Activated naive CD4-positive, alpha-beta T cell treated with anti-CD3 and anti-CD28 coated beads for 36 hours (primary cell): ENCODE measurements at regions of chr12 and their contacts with region 1.

Region 1: DNA sequence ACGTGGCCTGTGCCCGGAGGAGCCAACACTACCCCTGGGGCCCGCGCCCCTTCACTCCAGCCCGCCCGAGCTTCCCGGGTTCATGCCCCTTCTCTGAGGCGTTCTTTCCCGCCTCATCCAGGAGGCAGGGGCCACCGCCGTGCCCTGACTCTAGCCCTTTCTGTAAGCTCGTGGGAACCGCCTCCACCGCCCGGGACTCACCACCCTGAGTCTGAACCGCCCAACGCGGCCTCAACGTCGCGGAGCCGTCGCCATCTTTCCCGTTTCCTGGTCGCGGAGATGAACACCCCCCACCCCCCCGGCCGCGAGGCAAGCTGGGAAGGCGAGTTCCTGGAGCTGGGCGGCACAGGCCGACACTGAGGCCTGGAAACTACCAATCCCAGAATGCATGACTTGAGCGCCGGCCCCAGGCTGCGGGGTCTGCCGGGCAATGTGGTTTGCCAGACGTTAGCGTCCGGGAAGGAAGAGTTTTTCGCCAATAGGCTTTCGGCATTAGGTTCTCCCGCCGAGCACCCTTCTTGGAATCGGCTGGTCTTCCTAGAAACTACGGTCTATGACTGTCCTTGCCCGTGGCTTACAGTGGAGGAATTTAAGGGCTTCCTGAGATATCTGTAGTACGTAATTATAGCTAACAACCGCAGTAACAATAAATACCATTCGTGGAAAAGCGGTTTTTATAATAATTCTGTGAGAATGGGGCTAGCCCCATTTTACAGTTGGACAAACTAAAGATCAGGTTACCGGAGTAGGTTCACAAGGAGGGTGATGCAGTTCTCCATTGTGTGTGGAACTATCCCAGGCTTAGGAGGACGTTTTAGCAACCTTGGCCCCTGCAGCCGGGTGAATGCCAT is at the start of gene DDX23:
- DNase-seq: peak; percentile 97
- H3K4me3 Mint-ChIP-seq: peak within 1 kb of the TSS; percentile 94
- H3K27ac Mint-ChIP-seq: peak within 1 kb of the TSS; percentile 98
- H3K4me1 Mint-ChIP-seq: peaks cover 28% of the 10 kb centered on the region
- H3K27me3 Mint-ChIP-seq: no peaks in the 10 kb centered on the region
- total RNA-seq, gene DDX23: 115 to 125 TPM

Region 2: DNA sequence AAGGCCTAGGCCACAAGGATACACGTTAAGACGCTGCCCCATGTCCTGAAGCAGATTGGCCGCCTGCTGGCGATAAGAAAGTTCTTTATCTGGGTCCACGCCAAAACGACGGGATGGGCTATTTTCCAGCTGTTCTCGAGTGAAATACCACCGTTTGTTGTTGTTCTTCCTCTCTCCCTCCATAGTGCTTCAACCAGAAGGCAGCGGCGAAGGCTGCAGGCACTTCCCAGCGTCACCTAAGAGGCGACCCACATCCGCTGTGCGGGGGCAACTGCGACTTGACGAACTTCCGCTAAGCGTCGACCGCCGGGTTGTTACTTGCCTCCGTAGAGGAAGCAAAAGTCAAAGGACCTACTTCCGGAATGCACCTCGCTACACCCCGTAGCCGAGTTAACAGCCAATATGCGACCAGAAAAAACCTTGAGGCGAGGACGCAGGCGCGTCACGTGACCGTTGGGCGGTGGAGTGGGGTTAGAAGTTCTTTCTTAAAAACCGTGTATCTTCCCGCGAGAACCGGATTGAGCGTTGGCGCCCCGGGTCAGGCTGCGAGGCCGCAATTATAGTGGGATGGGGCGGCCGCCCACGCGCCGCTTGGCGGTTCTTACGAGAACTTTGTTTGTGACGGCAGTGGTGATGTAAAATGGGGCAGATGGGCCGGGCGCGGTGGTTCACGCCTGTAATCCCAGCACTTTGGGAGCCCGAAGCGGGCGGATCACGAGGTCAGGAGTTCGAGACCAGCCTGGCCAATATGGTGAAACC is 135.4 kb before region 1 on chr12 and contains the start of gene CCNT1:
- CTCF ChIA-PET with region 1: no interaction called
- intact Hi-C with region 1: loop called (anchors 1 kb)
- DNase-seq: peak; percentile 100
- H3K4me3 Mint-ChIP-seq: peak within 1 kb of the TSS; percentile 90
- H3K27ac Mint-ChIP-seq: peak within 1 kb of the TSS; percentile 99
- H3K4me1 Mint-ChIP-seq: peaks cover 39% of the 10 kb centered on the region
- H3K27me3 Mint-ChIP-seq: no peaks in the 10 kb centered on the region
- total RNA-seq, gene CCNT1: 73.8 to 77.0 TPM

Region 3: GRCh38 chr12:48865434-48866290 is 13.6 kb after region 1 on chr12 and contains the start of gene RND1:
- CTCF ChIA-PET with region 1: interaction called, 86 read pairs
- intact Hi-C with region 1: loop called (anchors 1 kb)
- DNase-seq: peak; percentile 93
- H3K4me3 Mint-ChIP-seq: peak within 1 kb of the TSS; percentile 87
- H3K27ac Mint-ChIP-seq: peak within 1 kb of the TSS; percentile 62
- H3K4me1 Mint-ChIP-seq: peaks cover 22% of the 10 kb centered on the region
- H3K27me3 Mint-ChIP-seq: peaks cover 22% of the 10 kb centered on the region
- total RNA-seq, gene RND1: 6.8 to 7.4 TPM

Region 4: GRCh38 chr12:48924617-48925303 is 72.7 kb after region 1 on chr12:
- CTCF ChIA-PET with region 1: interaction called, 14 read pairs
- intact Hi-C with region 1: loop called (anchors 1 kb)
- DNase-seq: peak; percentile 81
- H3K4me3 Mint-ChIP-seq: peak overlapping the region; percentile 91
- H3K27ac Mint-ChIP-seq: peak overlapping the region; percentile 96
- H3K4me1 Mint-ChIP-seq: peaks cover 49% of the 10 kb centered on the region
- H3K27me3 Mint-ChIP-seq: no peaks in the 10 kb centered on the region

Region 5: DNA sequence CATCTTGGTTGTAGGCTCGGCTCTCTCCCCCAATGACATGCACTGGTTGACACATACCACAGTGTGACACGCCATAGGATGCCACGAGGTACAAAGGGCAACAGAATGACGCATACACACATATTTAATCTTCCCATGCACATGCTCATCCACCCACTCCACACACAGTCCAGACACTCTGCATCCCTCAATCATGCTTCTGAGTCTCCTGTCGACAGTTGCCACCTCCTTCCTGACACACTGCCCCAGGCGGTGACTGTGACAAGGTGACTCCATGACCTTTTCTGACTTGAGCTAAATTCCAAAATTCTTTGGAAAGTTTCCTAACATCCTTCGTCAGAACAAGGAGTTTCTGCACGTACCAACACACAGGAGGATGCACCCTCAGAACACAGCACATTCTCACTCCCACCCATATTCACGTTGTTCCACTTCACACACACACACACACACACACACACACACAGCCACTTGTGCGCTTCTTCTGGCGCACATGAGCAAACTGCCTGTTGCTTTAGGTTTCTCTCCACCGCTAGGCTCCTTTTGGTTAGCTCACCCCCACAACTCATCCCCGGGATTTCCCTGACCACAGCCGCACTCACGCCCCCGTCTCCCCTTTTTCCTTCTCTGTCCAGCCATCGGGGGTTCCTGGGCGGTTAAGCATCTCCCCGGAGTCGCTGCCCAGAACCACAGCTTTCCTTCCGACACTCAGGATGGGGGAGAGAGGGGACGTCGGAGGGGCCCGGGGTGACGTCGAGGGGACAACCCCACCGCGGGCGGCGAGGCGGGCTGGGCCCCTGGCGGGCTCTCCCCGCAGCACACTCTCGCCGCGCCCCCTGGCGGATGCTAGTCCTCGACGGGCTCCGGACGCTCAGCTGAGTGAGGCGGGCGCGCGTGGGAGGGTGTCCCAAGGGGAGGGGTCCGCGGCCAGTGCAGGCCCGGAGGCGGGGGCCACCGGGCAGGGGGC is 125.5 kb after region 1 on chr12:
- CTCF ChIA-PET with region 1: interaction called, 16 read pairs
- intact Hi-C with region 1: loop called (anchors 1 kb)
- DNase-seq: peak; percentile 83
- H3K4me3 Mint-ChIP-seq: peak overlapping the region; percentile 19
- H3K27ac Mint-ChIP-seq: no peak overlapping the region
- H3K4me1 Mint-ChIP-seq: peaks cover 44% of the 10 kb centered on the region
- H3K27me3 Mint-ChIP-seq: peaks cover 67% of the 10 kb centered on the region

Region 6: DNA sequence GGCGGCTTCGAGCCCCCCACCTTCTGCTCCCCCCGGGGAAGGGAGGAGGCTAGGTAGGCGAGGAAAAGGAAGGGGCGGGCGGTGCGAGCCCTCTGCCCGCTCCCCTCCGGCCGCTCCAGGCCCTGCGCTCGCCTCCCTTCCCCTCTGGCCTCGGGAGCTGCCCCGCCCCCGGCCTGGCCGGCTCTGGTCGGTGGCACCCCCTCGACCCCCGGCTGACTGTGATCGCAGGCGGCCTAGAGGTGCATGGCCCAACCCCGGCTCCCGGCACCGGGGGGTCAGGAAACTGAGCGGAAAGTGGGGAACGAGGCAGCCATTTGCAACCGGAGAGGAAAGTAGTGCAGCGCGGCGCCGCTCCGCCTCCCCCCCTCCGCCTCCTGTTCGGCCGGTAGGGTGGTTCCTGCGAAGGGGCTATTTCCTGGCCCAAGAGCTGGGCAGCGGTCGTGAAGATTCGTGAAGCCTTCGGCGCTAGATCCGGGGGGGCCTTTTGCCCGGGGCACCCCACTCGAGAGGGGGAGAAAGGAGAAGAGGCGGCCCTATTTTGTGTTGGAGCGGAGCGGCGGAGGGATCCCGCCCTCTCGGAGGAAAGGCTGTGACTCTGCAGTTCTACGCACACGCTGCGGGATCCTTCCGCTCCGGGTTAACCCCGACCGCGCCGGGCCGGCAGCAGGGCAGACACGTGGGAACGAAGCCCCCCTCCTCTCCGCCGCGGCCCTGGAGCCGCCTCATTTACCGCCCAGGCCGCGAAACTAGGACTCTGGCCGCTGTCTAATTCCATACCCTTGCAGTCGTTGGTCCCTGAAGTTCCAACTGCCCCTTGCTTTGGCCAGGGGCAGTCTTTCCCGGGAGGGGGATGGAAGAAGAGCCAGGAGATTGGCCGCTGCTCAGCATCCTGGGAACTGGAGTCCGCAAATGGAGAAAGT is 208.4 kb after region 1 on chr12 and contains the start of gene KMT2D:
- CTCF ChIA-PET with region 1: interaction called, 3 read pairs
- intact Hi-C with region 1: loop called (anchors 5 kb)
- DNase-seq: peak; percentile 91
- H3K4me3 Mint-ChIP-seq: peak within 1 kb of the TSS; percentile 93
- H3K27ac Mint-ChIP-seq: peak within 1 kb of the TSS; percentile 96
- H3K4me1 Mint-ChIP-seq: peaks cover 51% of the 10 kb centered on the region
- H3K27me3 Mint-ChIP-seq: no peaks in the 10 kb centered on the region
- total RNA-seq, gene KMT2D: 44.9 to 49.0 TPM

Region 7: DNA sequence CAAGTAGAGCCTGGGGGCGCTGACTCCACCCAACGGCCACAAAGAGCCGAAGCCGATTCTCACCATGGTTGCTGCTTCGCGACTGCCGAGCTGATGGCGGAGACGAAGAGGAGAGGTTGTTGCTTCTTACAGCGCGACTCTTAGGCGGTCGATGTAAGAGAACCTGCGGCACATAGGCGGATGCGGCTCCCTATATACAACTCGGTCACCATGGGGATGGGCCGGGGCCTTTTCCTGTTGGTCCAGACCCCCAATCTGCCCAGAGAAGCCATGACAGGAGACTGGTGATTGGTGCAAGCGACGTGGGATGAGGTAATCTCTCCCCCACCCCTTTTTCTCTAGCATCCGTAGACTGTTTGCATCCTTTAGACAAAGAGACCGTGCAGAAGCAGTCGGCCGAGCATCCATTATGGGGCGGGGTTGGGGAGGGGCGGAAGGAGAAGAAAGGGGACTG is 336.8 kb after region 1 on chr12 and contains the start of gene TUBA1A:
- CTCF ChIA-PET with region 1: no interaction called
- intact Hi-C with region 1: loop called (anchors 5 kb)
- DNase-seq: peak; percentile 97
- H3K4me3 Mint-ChIP-seq: peak within 1 kb of the TSS; percentile 84
- H3K27ac Mint-ChIP-seq: peak within 1 kb of the TSS; percentile 86
- H3K4me1 Mint-ChIP-seq: peaks cover 13% of the 10 kb centered on the region
- H3K27me3 Mint-ChIP-seq: no peaks in the 10 kb centered on the region
- total RNA-seq, gene TUBA1A: 47.4 to 49.1 TPM